CD4-positive, alpha-beta T cell (primary cell): ENCODE measurements at regions of chr15 and their contacts with region 1.

Region 1: GRCh38 chr15:52528991-52529926 is 579 bp upstream of the MYO5A start:
- DNase-seq: peak; percentile 64 to 94 (median 78)
- ATAC-seq: peak; percentile 87
- H3K4me3 ChIP-seq: peak overlapping the region; percentile 75
- H3K4me3 Mint-ChIP-seq: peak overlapping the region; percentile 89
- H3K27ac ChIP-seq: peak overlapping the region; percentile 64 to 88
- H3K27ac Mint-ChIP-seq: peak overlapping the region; percentile 84
- H3K4me1 ChIP-seq: peaks cover 22% of the 10 kb centered on the region
- H3K4me1 Mint-ChIP-seq: peaks cover 32% of the 10 kb centered on the region
- H3K27me3 ChIP-seq: no peaks in the 10 kb centered on the region
- H3K27me3 Mint-ChIP-seq: no peaks in the 10 kb centered on the region
- CTCF ChIP-seq: peak; percentile 15

Region 2: GRCh38 chr15:52256366-52256765 is 272.9 kb before region 1 on chr15:
- CTCF ChIA-PET with region 1: no interaction called
- POLR2A ChIA-PET with region 1: interaction called, 4 read pairs
- intact Hi-C with region 1: loop called in 1 of 2 experiments (anchors 5 kb)
- DNase-seq: peak; percentile 58 to 90 (median 72)
- ATAC-seq: peak; percentile 96
- H3K4me3 ChIP-seq: no peak overlapping the region
- H3K4me3 Mint-ChIP-seq: peak overlapping the region; percentile 79
- H3K27ac ChIP-seq: no peak overlapping the region
- H3K27ac Mint-ChIP-seq: peak overlapping the region; percentile 34
- H3K4me1 ChIP-seq: peaks cover 14% of the 10 kb centered on the region
- H3K4me1 Mint-ChIP-seq: peaks cover 12% of the 10 kb centered on the region
- H3K27me3 ChIP-seq: no peaks in the 10 kb centered on the region
- H3K27me3 Mint-ChIP-seq: no peaks in the 10 kb centered on the region
- CTCF ChIP-seq: peak; percentile 76

Region 3: GRCh38 chr15:52466134-52466701 is 63.0 kb before region 1 on chr15:
- CTCF ChIA-PET with region 1: no interaction called
- POLR2A ChIA-PET with region 1: interaction called, 4 read pairs
- intact Hi-C with region 1: loop called in 1 of 2 experiments (anchors 10 kb)
- DNase-seq: peak in 4 of 14 experiments; percentile 4 to 72 (median 50)
- ATAC-seq: peak; percentile 55
- H3K4me3 ChIP-seq: no peak overlapping the region
- H3K4me3 Mint-ChIP-seq: no peak overlapping the region
- H3K27ac ChIP-seq: peak overlapping the region in 1 of 2 donors; percentile 38
- H3K27ac Mint-ChIP-seq: peak overlapping the region; percentile 77
- H3K4me1 ChIP-seq: peaks cover 29% of the 10 kb centered on the region
- H3K4me1 Mint-ChIP-seq: peaks cover 52% of the 10 kb centered on the region
- H3K27me3 ChIP-seq: no peaks in the 10 kb centered on the region
- H3K27me3 Mint-ChIP-seq: no peaks in the 10 kb centered on the region
- CTCF ChIP-seq: no peak

Region 4: DNA sequence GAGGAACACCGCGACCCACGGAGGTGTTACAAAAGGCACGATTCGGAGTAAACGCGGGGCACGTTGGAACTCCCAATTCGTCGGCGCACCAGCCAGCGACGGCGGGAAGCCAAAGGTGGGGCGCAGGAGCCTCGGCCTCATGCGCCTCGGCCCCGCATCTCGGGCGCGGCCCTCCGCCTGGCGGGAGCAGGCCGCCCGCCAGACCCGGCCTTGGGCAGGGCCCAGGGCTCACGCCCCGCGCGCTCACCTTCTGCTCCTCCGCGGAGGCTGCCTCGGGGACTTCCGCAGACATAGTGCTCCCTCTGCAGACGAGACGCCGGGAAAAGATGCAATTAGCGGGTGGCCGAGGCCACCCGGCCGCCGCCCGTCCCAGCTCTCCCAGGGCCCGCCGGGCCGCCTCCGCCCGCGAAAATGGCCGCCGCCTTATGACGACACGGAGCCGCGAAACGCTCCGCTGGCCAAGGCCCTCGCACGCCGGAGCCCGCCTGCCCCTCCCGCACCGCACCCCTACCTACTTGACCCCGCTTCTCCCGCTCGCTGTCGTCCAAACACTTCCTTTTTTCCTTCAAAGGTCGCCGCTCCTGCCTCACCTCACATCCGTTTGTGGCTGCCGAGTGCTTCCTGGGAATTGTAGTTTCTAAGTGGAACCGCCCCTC is 39.5 kb after region 1 on chr15 and contains the start of gene ARPP19:
- CTCF ChIA-PET with region 1: no interaction called
- POLR2A ChIA-PET with region 1: interaction called, 9 read pairs
- intact Hi-C with region 1: loop called (anchors 1 to 2 kb)
- DNase-seq: peak; percentile 60 to 93 (median 71)
- ATAC-seq: peak; percentile 72
- H3K4me3 ChIP-seq: peak within 1 kb of the TSS; percentile 75
- H3K4me3 Mint-ChIP-seq: peak within 1 kb of the TSS; percentile 99
- H3K27ac ChIP-seq: peak within 1 kb of the TSS; percentile 91 to 93
- H3K27ac Mint-ChIP-seq: peak within 1 kb of the TSS; percentile 98
- H3K4me1 ChIP-seq: peaks cover 35% of the 10 kb centered on the region
- H3K4me1 Mint-ChIP-seq: peaks cover 45% of the 10 kb centered on the region
- H3K27me3 ChIP-seq: no peaks in the 10 kb centered on the region
- H3K27me3 Mint-ChIP-seq: no peaks in the 10 kb centered on the region
- CTCF ChIP-seq: peak; percentile 24
- total RNA-seq, gene ARPP19: 134 to 146 TPM

Region 5: GRCh38 chr15:52735231-52736089 is 206.2 kb after region 1 on chr15:
- CTCF ChIA-PET with region 1: no interaction called
- POLR2A ChIA-PET with region 1: no interaction called
- intact Hi-C with region 1: no loop called
- DNase-seq: peak; percentile 37 to 88 (median 58)
- ATAC-seq: peak; percentile 95
- H3K4me3 ChIP-seq: no peak overlapping the region
- H3K4me3 Mint-ChIP-seq: no peak overlapping the region
- H3K27ac ChIP-seq: no peak overlapping the region
- H3K27ac Mint-ChIP-seq: no peak overlapping the region
- H3K4me1 ChIP-seq: peaks cover 3% of the 10 kb centered on the region
- H3K4me1 Mint-ChIP-seq: peaks cover 2% of the 10 kb centered on the region
- H3K27me3 ChIP-seq: no peaks in the 10 kb centered on the region
- H3K27me3 Mint-ChIP-seq: peaks cover 4% of the 10 kb centered on the region
- CTCF ChIP-seq: peak; percentile 89